Calu3 (cell line): ENCODE measurements at regions of chr6 and their contacts with region 1.

Region 1: DNA sequence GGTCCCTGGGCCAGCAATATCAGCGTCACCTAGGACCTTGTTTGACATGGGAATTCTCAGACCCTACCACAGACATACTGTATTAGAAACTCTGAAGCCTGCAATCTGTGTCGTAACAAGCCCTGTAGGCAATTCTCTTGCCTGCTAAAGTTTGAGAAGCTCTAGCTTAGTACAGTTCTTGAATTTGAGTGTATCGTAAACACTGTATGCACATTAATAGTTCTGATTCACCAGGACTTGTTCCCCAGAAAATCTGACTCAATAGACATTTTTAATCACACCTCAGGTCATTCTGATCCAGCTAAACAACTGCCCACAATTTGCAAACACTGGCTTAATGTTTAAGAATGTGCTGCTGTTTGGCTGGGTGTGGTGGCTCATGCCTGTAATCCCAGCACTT is 414.3 kb downstream of the TFAP2A start:
- DNase-seq: no peak
- H3K4me3 Mint-ChIP-seq: no peak overlapping the region
- H3K27ac Mint-ChIP-seq: no peak overlapping the region
- H3K4me1 Mint-ChIP-seq: no peaks in the 10 kb centered on the region
- H3K27me3 Mint-ChIP-seq: no peaks in the 10 kb centered on the region
- CTCF ChIP-seq: no peak

Region 2: GRCh38 chr6:9957215-9957759 is 43.3 kb before region 1 on chr6:
- CTCF ChIA-PET with region 1: no interaction called
- intact Hi-C with region 1: no loop called
- DNase-seq: no peak
- H3K4me3 Mint-ChIP-seq: no peak overlapping the region
- H3K27ac Mint-ChIP-seq: no peak overlapping the region
- H3K4me1 Mint-ChIP-seq: no peaks in the 10 kb centered on the region
- H3K27me3 Mint-ChIP-seq: no peaks in the 10 kb centered on the region
- CTCF ChIP-seq: no peak

Region 3: DNA sequence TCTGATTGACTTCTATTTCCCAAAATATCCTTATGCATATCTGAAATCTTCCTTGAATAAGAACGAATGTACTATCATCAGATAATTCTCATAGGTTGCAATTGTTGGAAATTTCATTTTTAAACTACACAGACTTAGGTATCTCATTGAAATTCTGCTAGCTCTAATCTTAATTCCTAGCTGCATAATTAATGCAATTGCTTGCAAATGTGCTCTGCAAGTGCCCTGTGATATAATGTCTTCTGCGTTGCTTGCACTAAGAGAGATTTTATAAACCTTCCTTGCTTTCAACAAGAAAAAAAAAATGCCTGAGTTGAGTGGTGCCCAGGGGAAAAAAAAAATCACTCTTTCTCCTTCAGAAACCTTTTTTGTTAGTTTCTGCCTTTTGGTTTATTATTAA is 59.5 kb after region 1 on chr6:
- CTCF ChIA-PET with region 1: interaction called, 10 read pairs
- intact Hi-C with region 1: no loop called
- DNase-seq: no peak
- H3K4me3 Mint-ChIP-seq: no peak overlapping the region
- H3K27ac Mint-ChIP-seq: no peak overlapping the region
- H3K4me1 Mint-ChIP-seq: peaks cover 9% of the 10 kb centered on the region
- H3K27me3 Mint-ChIP-seq: no peaks in the 10 kb centered on the region
- CTCF ChIP-seq: no peak

Region 4: GRCh38 chr6:11043961-11044711 is 1043.6 kb after region 1 on chr6 and contains the start of gene ELOVL2:
- CTCF ChIA-PET with region 1: no interaction called
- intact Hi-C with region 1: no loop called
- DNase-seq: peak; percentile 25
- H3K4me3 Mint-ChIP-seq: peak within 1 kb of the TSS; percentile 66
- H3K27ac Mint-ChIP-seq: no peak within 1 kb of the TSS
- H3K4me1 Mint-ChIP-seq: peaks cover 18% of the 10 kb centered on the region
- H3K27me3 Mint-ChIP-seq: peaks cover 12% of the 10 kb centered on the region
- CTCF ChIP-seq: peak; percentile 59
- total RNA-seq, gene ELOVL2: 0.20 and 0.47 TPM in 2 replicates